Activated CD8-positive, alpha-beta T cell treated with anti-CD3 and anti-CD28 coated beads, Interleukin-2, amount 10 ng/mL, durations not matched to agents 7 days and 5 days (primary cell): ENCODE measurements at regions of chr11 and their contacts with region 1.

Region 1: GRCh38 chr11:102522312-102523188 is 8.0 kb downstream of the MMP7 start:
- DNase-seq: no peak
- ATAC-seq: no peak
- H3K4me3 Mint-ChIP-seq: no peak overlapping the region
- H3K27ac Mint-ChIP-seq: no peak overlapping the region
- H3K4me1 Mint-ChIP-seq: peaks cover 8% of the 10 kb centered on the region
- H3K27me3 Mint-ChIP-seq: peaks cover 26% of the 10 kb centered on the region

Region 2: DNA sequence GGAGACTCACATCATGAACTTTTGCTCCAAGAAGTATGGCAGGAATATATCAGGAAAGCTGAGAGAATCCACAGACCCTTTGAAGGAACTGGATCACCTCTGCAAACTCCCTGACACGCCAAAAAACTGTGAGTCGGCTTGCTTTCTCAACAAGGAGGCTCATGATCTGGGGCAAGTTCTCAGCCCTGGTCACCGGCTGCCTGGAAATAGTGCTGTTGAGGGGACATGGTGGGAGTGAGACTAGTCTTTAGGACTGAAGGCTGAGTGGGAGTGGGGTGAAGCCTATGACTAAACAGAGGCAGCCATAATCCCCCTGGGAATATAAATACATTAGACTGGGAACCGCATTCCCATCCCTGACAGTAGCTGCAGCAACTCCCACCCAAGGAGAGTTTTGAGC is 16.4 kb after region 1 on chr11:
- CTCF ChIA-PET with region 1: interaction called, 10 read pairs
- POLR2A ChIA-PET with region 1: no interaction called
- DNase-seq: no peak
- ATAC-seq: no peak
- H3K4me3 Mint-ChIP-seq: no peak overlapping the region
- H3K27ac Mint-ChIP-seq: no peak overlapping the region
- H3K4me1 Mint-ChIP-seq: peaks cover 5% of the 10 kb centered on the region
- H3K27me3 Mint-ChIP-seq: peaks cover 16% of the 10 kb centered on the region